ENCODE measurements at regions of chr3 and their contacts with region 1.

Region 1: GRCh38 chr3:5057857-5058324 is 64.2 kb upstream of the ARL8B start:
- DNase-seq: peak; percentile 82 to 86
- ATAC-seq: peak; percentile 87
- H3K4me3 ChIP-seq: no peak overlapping the region
- H3K27ac ChIP-seq: no peak overlapping the region
- H3K4me1 ChIP-seq: peaks cover 0 to 3% of the 10 kb centered on the region in 2 donors
- H3K27me3 ChIP-seq: no peaks in the 10 kb centered on the region

Region 2: GRCh38 chr3:4656059-4656458 is 401.8 kb before region 1 on chr3:
- intact Hi-C with region 1: loop called (anchors 5 to 10 kb)
- DNase-seq: peak; percentile 69 to 81
- ATAC-seq: peak; percentile 89
- H3K4me3 ChIP-seq: no peak overlapping the region
- H3K27ac ChIP-seq: no peak overlapping the region
- H3K4me1 ChIP-seq: peaks cover 0 to 2% of the 10 kb centered on the region in 2 donors
- H3K27me3 ChIP-seq: no peaks in the 10 kb centered on the region

Region 3: DNA sequence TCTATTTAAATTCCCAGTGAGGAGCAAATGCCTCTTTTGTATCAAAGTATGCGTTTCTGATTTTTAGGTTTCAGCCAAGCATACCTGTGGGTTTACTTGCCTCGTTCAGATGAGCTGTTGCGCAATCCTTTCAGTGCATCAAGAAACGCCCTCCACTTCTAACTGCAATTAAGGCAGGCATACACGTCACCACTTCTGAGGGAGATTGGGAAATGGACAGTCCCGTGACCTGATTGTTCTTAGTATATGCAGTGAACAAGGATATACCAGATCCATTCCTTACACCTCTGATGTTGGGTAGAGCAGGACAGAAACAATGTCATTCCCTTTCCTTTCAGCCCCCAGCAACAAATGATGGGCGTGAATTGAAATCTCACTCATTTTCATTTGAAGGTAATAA is 345.7 kb before region 1 on chr3:
- intact Hi-C with region 1: loop called (anchors 2 to 5 kb)
- DNase-seq: no peak
- ATAC-seq: no peak
- H3K4me3 ChIP-seq: no peak overlapping the region
- H3K27ac ChIP-seq: no peak overlapping the region
- H3K4me1 ChIP-seq: no peaks in the 10 kb centered on the region
- H3K27me3 ChIP-seq: no peaks in the 10 kb centered on the region

Region 4: DNA sequence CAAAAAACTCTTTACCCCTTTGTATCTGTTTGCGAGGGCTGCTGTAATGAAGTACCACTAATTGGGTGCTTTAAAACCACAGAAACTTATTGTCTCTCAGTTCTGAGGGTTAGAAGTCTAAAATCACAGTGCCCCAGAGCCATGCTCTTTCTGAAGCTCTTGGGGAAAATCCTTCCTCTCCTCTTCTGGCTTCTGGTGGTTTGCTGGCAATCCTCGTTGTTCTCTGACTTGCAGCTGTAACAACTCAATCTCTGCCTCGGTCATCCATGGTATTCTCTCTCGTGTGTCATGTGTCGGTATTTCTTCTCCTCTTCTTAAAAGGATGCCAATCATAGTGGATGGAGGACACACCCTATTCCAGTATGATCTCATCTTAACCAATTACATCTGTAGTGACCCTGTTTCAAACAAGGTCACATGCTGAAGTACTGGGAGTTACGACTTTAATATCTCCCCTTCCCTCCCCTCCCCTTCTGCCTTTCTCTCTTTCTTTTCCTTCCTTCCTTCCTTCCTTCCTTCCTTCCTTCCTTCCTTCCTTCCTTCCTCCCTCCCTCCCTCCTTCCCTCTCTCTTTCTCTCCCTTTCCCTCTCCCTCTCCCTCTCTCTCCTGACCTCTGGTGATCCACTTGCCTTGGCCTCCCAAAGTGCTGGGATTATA is 57.7 kb after region 1 on chr3:
- intact Hi-C with region 1: no loop called
- DNase-seq: no peak
- ATAC-seq: no peak
- H3K4me3 ChIP-seq: no peak overlapping the region
- H3K27ac ChIP-seq: no peak overlapping the region
- H3K4me1 ChIP-seq: no peaks in the 10 kb centered on the region
- H3K27me3 ChIP-seq: no peaks in the 10 kb centered on the region

Measured in aorta (tissue), 5 donors.